ENCODE measurements at regions of chr6 and their contacts with region 1.

Region 1: GRCh38 chr6:88870717-88871330 is 92.6 kb downstream of the RNGTT start:
- DNase-seq: peak in 1 of 2 donors; percentile 34
- ATAC-seq: peak in 1 of 8 donors; percentile 48
- H3K4me3 ChIP-seq: no peak overlapping the region
- H3K27ac ChIP-seq: no peak overlapping the region
- H3K4me1 ChIP-seq: peaks cover 0 to 5% (median 0%) of the 10 kb centered on the region in 9 donors
- H3K27me3 ChIP-seq: no peaks in the 10 kb centered on the region
- CTCF ChIP-seq: peak; percentile 42 to 85 (median 72)

Region 2: DNA sequence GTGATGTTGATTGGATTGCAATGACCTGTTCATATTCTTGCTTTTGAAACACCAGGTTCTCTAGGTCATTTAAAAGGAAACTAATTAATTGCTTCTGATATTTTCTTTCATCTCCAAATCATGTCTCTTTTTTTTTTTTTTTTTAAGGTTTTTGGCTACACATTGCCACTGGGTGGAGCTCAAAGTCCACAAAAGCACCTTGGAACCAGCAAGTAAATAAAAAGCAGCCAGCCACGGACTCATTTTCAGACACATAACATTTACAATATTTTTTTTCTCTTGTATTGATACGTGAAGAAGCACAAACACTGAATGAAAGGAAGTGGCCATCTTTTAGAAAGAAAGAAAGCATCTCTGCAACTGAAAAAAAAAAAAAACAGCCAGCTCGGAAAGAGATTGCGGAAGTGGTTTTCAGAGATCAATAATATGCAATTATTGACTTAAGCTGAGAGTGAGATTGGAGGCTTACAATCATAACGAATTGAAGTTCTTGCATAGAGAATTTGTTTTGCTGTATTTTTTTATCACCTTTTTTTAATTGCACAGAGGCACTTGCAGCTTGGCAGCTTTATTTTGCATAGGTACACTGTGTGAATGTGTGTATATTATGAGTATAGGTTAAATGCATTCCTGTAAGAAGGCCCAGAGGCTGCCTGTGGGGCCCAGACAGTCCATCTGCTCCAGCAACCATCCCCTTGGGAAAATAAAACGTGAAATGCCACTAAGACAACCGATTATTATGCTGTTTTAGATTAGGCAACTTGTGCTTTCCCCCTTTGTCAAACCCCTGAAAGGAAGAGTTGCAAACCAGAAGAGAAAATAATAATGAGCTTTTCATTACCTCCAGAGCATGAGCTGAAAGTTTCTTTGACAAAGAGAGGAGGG is 1804.1 kb before region 1 on chr6:
- intact Hi-C with region 1: loop called in 2 of 10 experiments (anchors 10 kb)
- DNase-seq: peak in 1 of 2 donors; percentile 40
- ATAC-seq: no peak
- H3K4me3 ChIP-seq: no peak overlapping the region
- H3K27ac ChIP-seq: no peak overlapping the region
- H3K4me1 ChIP-seq: peaks cover 0 to 3% (median 0%) of the 10 kb centered on the region in 9 donors
- H3K27me3 ChIP-seq: peaks cover 0 to 65% (median 12%) of the 10 kb centered on the region in 7 donors
- CTCF ChIP-seq: peak in 8 of 9 donors; percentile 20 to 68 (median 58)

Region 3: DNA sequence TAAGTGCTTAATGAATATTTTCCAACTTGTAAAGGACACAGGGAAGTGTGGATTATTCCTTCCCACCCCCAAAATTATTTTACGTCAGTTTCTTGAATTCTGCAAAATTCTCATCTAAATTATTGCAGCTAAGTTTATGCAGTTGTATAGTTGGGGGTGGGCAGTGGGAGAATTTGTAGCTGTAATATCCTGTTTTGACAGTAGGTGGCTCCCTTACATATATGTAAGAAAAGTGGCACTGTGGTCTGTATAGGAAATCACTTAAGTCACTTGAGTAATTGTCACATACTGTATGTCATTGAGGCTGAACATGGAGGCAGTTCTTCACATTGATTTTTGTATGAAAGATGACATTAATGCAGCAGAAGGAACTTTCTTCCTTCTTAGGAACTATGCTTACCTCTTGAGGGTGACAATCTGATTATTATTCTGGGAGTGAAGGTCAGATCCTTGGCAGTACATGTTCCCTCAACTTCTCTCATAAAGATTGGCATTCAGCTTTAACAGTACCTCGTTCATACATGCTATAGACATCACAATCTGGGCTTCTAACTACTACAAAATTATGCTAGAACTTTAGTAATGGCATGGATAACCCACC is 1477.7 kb before region 1 on chr6:
- intact Hi-C with region 1: loop called in 3 of 10 experiments (anchors 2 to 10 kb)
- DNase-seq: peak in 1 of 2 donors; percentile 30
- ATAC-seq: peak in 6 of 8 donors; percentile 64 to 83 (median 78)
- H3K4me3 ChIP-seq: no peak overlapping the region
- H3K27ac ChIP-seq: no peak overlapping the region
- H3K4me1 ChIP-seq: peaks cover 0 to 3% (median 0%) of the 10 kb centered on the region in 9 donors
- H3K27me3 ChIP-seq: no peaks in the 10 kb centered on the region
- CTCF ChIP-seq: peak; percentile 58 to 82 (median 77)

Region 4: GRCh38 chr6:87407901-87408720 is 1462.7 kb before region 1 on chr6 and contains the start of gene CFAP206:
- intact Hi-C with region 1: loop called in 1 of 10 experiments (anchors 10 kb)
- DNase-seq: peak; percentile 79 to 82
- ATAC-seq: peak; percentile 93 to 99 (median 96)
- H3K4me3 ChIP-seq: peak within 1 kb of the TSS; percentile 78 to 99 (median 90)
- H3K27ac ChIP-seq: peak within 1 kb of the TSS in 9 of 10 donors; percentile 71 to 88 (median 83)
- H3K4me1 ChIP-seq: peaks cover 0 to 15% (median 0%) of the 10 kb centered on the region in 9 donors
- H3K27me3 ChIP-seq: no peaks in the 10 kb centered on the region
- CTCF ChIP-seq: peak in 3 of 9 donors; percentile 14 to 33 (median 30)
- total RNA-seq, gene CFAP206: 0.18 to 0.54 (median 0.28) TPM in 5 of 10 donors, not detected in the others

Region 5: GRCh38 chr6:87929843-87930288 is 941.0 kb before region 1 on chr6:
- intact Hi-C with region 1: loop called (anchors 2 to 10 kb)
- DNase-seq: peak; percentile 68 to 82
- ATAC-seq: peak; percentile 89 to 98 (median 96)
- H3K4me3 ChIP-seq: no peak overlapping the region
- H3K27ac ChIP-seq: no peak overlapping the region
- H3K4me1 ChIP-seq: peaks cover 0 to 8% (median 0%) of the 10 kb centered on the region in 9 donors
- H3K27me3 ChIP-seq: no peaks in the 10 kb centered on the region
- CTCF ChIP-seq: peak; percentile 55 to 84 (median 80)

Region 6: DNA sequence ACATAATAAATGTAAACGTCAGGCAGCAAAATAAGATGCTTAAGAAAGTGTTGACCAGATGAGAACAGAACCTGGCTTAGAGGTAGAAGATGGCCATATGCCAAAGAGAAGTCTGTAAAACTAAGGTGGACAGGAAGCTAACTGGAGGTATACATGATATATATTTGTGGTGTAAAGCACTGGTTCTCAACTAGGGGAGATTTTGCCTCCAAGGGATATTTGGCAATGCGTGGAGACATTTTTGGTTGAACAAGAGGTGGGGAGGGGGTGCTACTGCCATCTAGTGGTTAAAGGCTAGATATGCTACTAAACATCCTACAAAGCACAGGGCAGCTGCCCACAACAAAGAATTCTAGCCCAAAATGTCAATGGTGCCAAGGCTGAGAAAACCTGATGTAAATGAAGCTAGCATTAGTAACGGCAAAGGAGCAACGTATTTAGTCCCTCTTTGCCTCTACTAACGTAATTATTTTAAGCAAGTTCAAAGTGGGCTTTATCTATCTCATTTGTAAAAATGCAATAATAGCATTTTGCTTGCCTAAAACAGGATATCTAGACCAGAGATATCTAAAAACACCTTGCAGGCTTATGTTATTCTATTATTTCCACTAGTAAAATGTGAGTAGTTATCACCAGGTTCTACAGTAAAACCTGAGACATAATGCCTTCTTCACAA is 90.0 kb before region 1 on chr6:
- intact Hi-C with region 1: loop called in 1 of 10 experiments (anchors 10 kb)
- DNase-seq: peak in 1 of 2 donors; percentile 53
- ATAC-seq: peak in 7 of 8 donors; percentile 47 to 70 (median 61)
- H3K4me3 ChIP-seq: no peak overlapping the region
- H3K27ac ChIP-seq: no peak overlapping the region
- H3K4me1 ChIP-seq: no peaks in the 10 kb centered on the region
- H3K27me3 ChIP-seq: no peaks in the 10 kb centered on the region
- CTCF ChIP-seq: peak; percentile 68 to 97 (median 89)

Region 7: GRCh38 chr6:89330910-89331309 is 460.1 kb after region 1 on chr6:
- intact Hi-C with region 1: no loop called
- DNase-seq: no peak
- ATAC-seq: no peak
- H3K4me3 ChIP-seq: no peak overlapping the region
- H3K27ac ChIP-seq: no peak overlapping the region
- H3K4me1 ChIP-seq: peaks cover 0 to 9% (median 0%) of the 10 kb centered on the region in 9 donors
- H3K27me3 ChIP-seq: no peaks in the 10 kb centered on the region
- CTCF ChIP-seq: no peak